CD8-positive, alpha-beta memory T cell (primary cell): ENCODE measurements at regions of chr20 and their contacts with region 1.

Region 1: GRCh38 chr20:13700761-13701160 is 62.0 kb upstream of the TASP1 start:
- DNase-seq: no peak
- H3K4me3 ChIP-seq: no peak overlapping the region
- H3K4me3 Mint-ChIP-seq: no peak overlapping the region
- H3K27ac ChIP-seq: no peak overlapping the region
- H3K27ac Mint-ChIP-seq: no peak overlapping the region
- H3K4me1 ChIP-seq: no peaks in the 10 kb centered on the region
- H3K4me1 Mint-ChIP-seq: no peaks in the 10 kb centered on the region
- H3K27me3 ChIP-seq: no peaks in the 10 kb centered on the region
- H3K27me3 Mint-ChIP-seq: peaks cover 2 to 28% of the 10 kb centered on the region in 2 donors

Region 2: GRCh38 chr20:13238001-13238653 is 462.6 kb before region 1 on chr20:
- CTCF ChIA-PET with region 1: no interaction called
- POLR2A ChIA-PET with region 1: no interaction called
- DNase-seq: no peak
- H3K4me3 ChIP-seq: no peak overlapping the region
- H3K4me3 Mint-ChIP-seq: no peak overlapping the region
- H3K27ac ChIP-seq: no peak overlapping the region
- H3K27ac Mint-ChIP-seq: no peak overlapping the region
- H3K4me1 ChIP-seq: no peaks in the 10 kb centered on the region
- H3K4me1 Mint-ChIP-seq: no peaks in the 10 kb centered on the region
- H3K27me3 ChIP-seq: no peaks in the 10 kb centered on the region
- H3K27me3 Mint-ChIP-seq: no peaks in the 10 kb centered on the region

Region 3: DNA sequence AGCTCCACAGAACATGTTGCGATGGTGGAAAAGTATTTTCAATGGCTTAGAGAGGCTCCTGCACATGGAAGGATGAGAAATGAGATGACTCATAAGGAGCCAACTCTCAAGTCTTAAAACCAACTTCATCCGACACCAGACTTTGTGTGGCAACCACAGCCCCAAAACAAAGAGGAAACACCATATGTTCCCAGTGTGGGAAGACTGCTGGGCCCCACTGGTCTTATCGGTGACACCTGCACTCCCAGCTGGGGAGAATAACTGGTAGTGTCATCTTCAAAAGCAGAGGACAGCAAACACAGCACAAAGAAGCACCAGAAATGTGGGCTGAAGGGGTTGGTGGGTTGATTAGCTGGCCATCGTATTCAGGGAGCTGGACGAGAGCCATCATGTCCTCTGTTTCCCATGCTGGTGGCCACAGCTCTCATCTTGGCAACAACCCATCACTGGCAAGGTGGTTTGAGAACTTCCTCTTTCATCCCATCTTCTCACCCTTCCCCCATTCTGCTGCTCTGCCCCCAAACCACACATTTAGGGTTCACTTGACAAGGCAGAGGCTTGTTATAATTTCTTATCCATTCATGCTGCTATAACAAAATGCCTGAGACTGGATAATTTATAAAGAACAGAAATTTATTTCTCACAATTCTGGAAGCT is 16.1 kb before region 1 on chr20:
- CTCF ChIA-PET with region 1: no interaction called
- POLR2A ChIA-PET with region 1: no interaction called
- DNase-seq: no peak
- H3K4me3 ChIP-seq: no peak overlapping the region
- H3K4me3 Mint-ChIP-seq: no peak overlapping the region
- H3K27ac ChIP-seq: no peak overlapping the region
- H3K27ac Mint-ChIP-seq: no peak overlapping the region
- H3K4me1 ChIP-seq: no peaks in the 10 kb centered on the region
- H3K4me1 Mint-ChIP-seq: peaks cover 0 to 3% (median 0%) of the 10 kb centered on the region in 3 donors
- H3K27me3 ChIP-seq: no peaks in the 10 kb centered on the region
- H3K27me3 Mint-ChIP-seq: peaks cover 12 to 41% of the 10 kb centered on the region in 2 donors

Region 4: GRCh38 chr20:13784271-13784892 is 83.6 kb after region 1 on chr20:
- CTCF ChIA-PET with region 1: no interaction called
- POLR2A ChIA-PET with region 1: interaction called, 13 read pairs
- DNase-seq: no peak
- H3K4me3 ChIP-seq: peak overlapping the region; percentile 84
- H3K4me3 Mint-ChIP-seq: peak overlapping the region; percentile 95 to 99 (median 97)
- H3K27ac ChIP-seq: peak overlapping the region; percentile 82
- H3K27ac Mint-ChIP-seq: peak overlapping the region; percentile 89 to 99 (median 96)
- H3K4me1 ChIP-seq: peaks cover 27% of the 10 kb centered on the region
- H3K4me1 Mint-ChIP-seq: peaks cover 50 to 74% (median 67%) of the 10 kb centered on the region in 3 donors
- H3K27me3 ChIP-seq: no peaks in the 10 kb centered on the region
- H3K27me3 Mint-ChIP-seq: no peaks in the 10 kb centered on the region

Region 5: DNA sequence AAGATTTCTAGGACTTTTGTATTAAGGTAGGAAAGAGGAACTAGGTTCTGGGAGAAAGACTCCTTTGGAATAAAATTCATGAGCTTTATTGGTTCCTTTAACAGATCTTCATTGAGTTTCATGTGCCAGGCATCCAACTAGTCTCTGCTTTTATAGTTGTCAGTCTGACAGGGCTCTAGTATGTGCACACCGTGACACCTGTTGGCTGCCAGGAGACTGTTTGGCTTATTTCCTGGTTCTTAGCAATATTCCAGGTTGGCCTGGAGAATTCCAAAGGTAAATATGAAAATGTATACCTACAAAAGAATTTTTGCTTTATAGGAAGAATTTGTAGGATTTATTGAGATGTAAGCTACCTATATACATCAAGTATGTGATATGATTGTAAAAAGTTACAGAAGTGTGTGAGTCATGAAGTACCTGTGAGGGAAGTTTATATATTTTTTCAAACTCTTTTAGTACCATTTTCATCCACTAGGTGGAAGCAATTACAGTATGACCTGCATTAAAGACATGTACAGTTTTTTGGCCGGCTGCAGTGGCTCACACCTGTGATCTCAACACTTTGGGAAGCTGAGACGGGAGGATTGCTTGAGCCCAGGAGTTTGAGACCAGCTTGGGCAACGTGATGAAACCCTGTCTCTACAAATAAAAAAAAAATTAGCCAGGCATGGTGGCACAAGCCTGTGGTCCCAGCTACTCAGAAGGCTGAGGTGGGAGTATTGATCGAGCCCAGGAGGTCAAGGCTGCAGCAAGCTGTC is 119.3 kb after region 1 on chr20:
- CTCF ChIA-PET with region 1: no interaction called
- POLR2A ChIA-PET with region 1: no interaction called
- DNase-seq: peak in 2 of 5 donors; percentile 13 to 17
- H3K4me3 ChIP-seq: no peak overlapping the region
- H3K4me3 Mint-ChIP-seq: no peak overlapping the region
- H3K27ac ChIP-seq: no peak overlapping the region
- H3K27ac Mint-ChIP-seq: peak overlapping the region in 4 of 8 donors; percentile 17 to 50 (median 36)
- H3K4me1 ChIP-seq: no peaks in the 10 kb centered on the region
- H3K4me1 Mint-ChIP-seq: no peaks in the 10 kb centered on the region
- H3K27me3 ChIP-seq: no peaks in the 10 kb centered on the region
- H3K27me3 Mint-ChIP-seq: no peaks in the 10 kb centered on the region

Region 6: DNA sequence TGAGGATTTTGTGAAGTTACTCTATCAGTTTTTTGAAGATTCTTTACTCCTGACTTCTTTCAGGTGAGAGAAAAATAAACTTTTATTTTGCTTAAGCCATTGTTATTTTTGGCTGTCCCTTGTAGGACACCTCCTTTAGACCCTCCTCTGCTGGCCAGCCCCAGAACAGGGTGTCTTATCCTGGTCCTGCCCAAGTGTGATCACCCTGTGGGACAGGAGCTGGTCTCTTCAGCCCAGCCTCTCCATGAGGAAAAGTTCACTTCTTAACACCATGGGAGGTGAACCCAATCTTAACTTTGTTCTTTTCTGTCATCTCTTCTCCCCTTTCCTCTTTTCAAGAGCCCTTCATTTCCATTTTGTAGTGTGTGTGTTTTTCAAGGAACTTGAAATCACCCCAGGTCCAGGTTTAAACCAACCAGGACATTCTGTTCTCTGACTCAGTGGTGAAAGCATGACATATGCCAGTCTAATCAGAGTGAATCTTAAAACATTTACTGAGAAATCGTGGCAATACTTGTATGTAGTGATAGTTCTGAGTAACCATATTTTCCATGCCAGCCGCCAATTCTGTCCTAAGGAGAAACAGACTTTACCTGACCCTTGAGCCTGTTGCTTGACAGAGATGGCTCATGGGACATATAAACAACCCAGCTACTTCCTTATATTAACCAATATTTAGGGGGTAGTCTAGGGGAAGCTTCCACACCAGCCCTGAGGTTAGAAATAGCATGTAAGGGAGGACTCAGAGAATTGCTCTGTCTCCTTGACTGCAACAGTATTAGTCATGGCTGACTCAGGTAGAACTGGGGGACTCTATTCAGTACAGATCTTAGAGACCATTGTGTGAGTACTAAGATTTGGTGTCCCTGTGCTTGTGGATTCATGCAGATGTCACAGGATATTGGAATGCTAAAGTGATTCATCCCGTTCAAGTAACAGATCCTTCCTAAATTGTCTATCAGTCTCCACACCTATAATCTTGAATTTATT is 587.9 kb after region 1 on chr20:
- CTCF ChIA-PET with region 1: no interaction called
- POLR2A ChIA-PET with region 1: no interaction called
- DNase-seq: no peak
- H3K4me3 ChIP-seq: no peak overlapping the region
- H3K4me3 Mint-ChIP-seq: no peak overlapping the region
- H3K27ac ChIP-seq: no peak overlapping the region
- H3K27ac Mint-ChIP-seq: no peak overlapping the region
- H3K4me1 ChIP-seq: no peaks in the 10 kb centered on the region
- H3K4me1 Mint-ChIP-seq: no peaks in the 10 kb centered on the region
- H3K27me3 ChIP-seq: no peaks in the 10 kb centered on the region
- H3K27me3 Mint-ChIP-seq: no peaks in the 10 kb centered on the region